H1 (cell line): ENCODE measurements at regions of chr10 and their contacts with region 1.

Region 1: DNA sequence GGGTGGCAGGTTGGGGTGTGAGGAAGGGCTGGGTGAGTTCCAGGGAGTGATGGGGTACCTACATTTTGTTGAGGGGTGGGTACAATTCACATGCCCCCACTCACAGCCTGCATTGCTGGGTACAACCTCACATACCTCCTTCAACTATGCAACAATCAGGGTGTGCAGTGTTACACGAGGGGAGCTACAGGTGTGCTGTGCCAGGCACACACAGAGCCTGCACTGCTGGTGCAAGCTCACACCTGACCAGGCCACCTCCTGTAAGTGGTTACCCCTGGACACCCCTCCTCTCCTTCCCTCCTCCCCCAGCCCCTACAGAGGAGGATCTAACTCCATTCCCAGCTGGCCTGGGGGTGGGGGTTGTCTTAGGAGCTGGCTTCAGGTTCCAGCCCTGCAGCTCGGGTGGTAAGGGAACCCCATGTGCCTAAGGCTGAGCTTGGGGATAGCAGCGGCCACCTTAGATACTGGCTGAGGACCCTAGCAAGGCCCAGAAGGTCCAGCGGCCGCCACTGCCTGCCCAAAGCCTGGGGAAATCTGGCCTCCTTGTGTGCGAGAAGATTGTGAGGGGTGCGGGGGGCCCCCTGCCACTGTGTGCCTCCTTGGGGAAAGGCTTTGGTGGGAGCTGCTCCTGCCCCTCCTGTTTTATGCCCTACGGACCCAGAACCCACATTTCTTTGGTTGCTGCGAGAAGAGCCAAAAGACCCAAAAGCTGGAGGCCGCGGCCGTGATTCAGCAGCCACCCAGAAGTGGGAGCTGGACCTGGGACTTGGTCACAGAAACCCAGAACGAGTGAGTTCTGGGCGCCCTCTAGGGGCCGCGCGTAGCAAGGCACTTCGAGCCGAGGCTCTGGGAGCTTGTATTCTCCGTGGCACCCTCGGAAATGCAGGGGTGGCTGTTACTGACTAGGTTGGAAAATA is 10.8 kb downstream of the TLX1 start:
- DNase-seq: peak in 1 of 2 experiments; percentile 93
- H3K4me3 ChIP-seq: no peak overlapping the region
- H3K27ac ChIP-seq: no peak overlapping the region
- H3K4me1 ChIP-seq: peaks cover 0 to 18% (median 9%) of the 10 kb centered on the region in 4 experiments; a peak in 5 of 7 replicates
- H3K27me3 ChIP-seq: peaks cover 97 to 100% (median 99%) of the 10 kb centered on the region in 4 experiments
- CTCF ChIP-seq: peak in 2 of 3 experiments; percentile 93 to 95; a peak in 3 of 4 replicates
- EP300 ChIP-seq: no peak
- POLR2A ChIP-seq: no peak
- RAD21 ChIP-seq: peak; percentile 84 to 90

Region 2: DNA sequence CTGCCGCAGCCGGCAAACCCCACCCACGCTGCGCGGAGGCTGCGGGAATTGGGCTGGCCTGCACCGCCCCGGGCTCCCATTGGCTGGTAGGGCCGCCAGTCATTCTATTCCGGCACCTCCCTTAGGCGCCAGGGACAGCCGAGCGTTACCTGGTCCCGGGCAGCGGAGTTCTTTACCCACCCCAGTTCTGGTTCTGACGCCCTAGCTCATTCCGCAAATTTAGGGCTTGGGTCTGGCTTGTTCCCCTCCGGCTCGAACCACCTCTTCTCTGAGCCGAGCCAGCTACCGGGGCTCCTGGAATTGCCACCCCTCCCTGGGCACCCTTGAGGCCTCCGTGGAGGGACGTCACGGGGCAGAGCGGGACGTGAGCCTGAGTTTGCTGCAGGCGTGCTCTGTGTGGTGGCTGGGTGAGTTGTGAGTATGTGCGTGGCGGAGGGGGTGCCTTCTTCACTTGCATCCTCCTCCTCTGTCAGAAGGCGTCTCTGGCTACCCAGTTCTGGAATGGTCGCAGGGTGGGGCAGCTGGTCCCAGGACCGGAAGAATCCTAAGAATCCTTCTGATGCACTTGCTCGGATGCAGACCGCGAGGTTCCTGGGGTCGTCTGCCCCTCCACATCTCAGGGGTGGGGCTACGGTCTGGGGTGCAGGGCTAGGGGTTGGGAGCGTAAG is 110.6 kb before region 1 on chr10 and contains the starts of genes PDZD7 and SFXN3:
- CTCF ChIA-PET with region 1: interaction called, 10 read pairs
- POLR2A ChIA-PET with region 1: no interaction called
- DNase-seq: peak in 1 of 2 experiments; percentile 98
- H3K4me3 ChIP-seq: peak within 1 kb of the TSS; percentile 41 to 66 (median 58)
- H3K27ac ChIP-seq: no peak within 1 kb of the TSS
- H3K4me1 ChIP-seq: peaks cover 0 to 26% (median 21%) of the 10 kb centered on the region in 4 experiments; a peak in 6 of 7 replicates
- H3K27me3 ChIP-seq: peaks cover 1 to 45% (median 36%) of the 10 kb centered on the region in 4 experiments
- CTCF ChIP-seq: no peak
- EP300 ChIP-seq: no peak
- POLR2A ChIP-seq: no peak
- RAD21 ChIP-seq: no peak
- total RNA-seq, gene PDZD7: 0.88 and 1.1 TPM in 2 replicates
- total RNA-seq, gene SFXN3: 2.8 and 3.1 TPM in 2 replicates

Region 3: GRCh38 chr10:101060036-101060950 is 81.6 kb before region 1 on chr10:
- CTCF ChIA-PET with region 1: interaction called, 240 read pairs
- POLR2A ChIA-PET with region 1: interaction called, 3 read pairs
- DNase-seq: peak in 1 of 2 experiments; percentile 95
- H3K4me3 ChIP-seq: peak overlapping the region; percentile 89 to 97 (median 94)
- H3K27ac ChIP-seq: peak overlapping the region; percentile 76
- H3K4me1 ChIP-seq: peaks cover 0 to 26% (median 16%) of the 10 kb centered on the region in 4 experiments; a peak in 6 of 7 replicates
- H3K27me3 ChIP-seq: peaks cover 35 to 42% (median 39%) of the 10 kb centered on the region in 4 experiments
- CTCF ChIP-seq: peak; percentile 85 to 89 (median 86)
- EP300 ChIP-seq: no peak
- POLR2A ChIP-seq: no peak; a peak in 1 of 3 replicates
- RAD21 ChIP-seq: peak; percentile 77 to 83

Region 4: DNA sequence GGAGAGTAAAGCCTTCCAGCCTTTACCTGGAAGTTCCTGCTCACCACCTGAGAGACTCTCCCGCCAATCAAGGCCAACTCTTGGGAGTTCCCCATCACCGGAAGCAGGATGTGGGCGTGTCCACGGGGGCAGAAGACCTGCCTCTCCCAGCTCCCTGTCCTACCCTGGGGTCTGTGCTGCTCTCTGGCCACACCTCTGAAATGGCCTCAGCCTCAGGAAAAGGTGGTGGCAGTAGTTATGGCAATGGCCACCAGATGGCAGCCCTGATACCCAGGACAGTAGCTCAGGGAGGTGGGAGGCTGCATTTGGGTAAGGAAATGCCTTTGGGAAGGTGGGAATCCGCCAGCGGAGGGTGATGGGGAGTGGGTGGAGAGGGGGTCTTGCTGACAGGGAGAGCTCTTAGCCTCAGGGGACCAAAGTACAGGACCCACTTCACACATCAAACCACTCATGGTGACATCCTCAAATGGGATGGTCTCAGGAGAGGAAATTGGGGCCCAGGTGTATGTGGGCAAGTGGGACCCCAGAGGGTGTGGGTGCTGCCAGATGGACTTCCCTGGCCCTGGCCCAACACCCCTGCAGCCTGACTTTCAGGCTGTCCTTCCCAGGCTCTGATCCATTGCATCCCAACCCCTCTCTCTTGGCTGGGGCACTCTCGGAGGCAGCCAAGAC is 46.2 kb before region 1 on chr10:
- CTCF ChIA-PET with region 1: interaction called, 268 read pairs
- POLR2A ChIA-PET with region 1: interaction called, 6 read pairs
- DNase-seq: peak; percentile 96
- H3K4me3 ChIP-seq: peak overlapping the region in 1 of 4 experiments; percentile 19; a peak in 1 of 8 replicates
- H3K27ac ChIP-seq: no peak overlapping the region
- H3K4me1 ChIP-seq: peaks cover 3 to 15% (median 8%) of the 10 kb centered on the region in 4 experiments; a peak in 5 of 7 replicates
- H3K27me3 ChIP-seq: peaks cover 0 to 25% (median 10%) of the 10 kb centered on the region in 4 experiments; a peak in 4 of 7 replicates
- CTCF ChIP-seq: peak; percentile 89 to 99 (median 92)
- EP300 ChIP-seq: no peak
- POLR2A ChIP-seq: no peak
- RAD21 ChIP-seq: peak; percentile 68 to 83

Region 5: GRCh38 chr10:101130984-101131961 is 10.6 kb before region 1 on chr10 and contains the start of gene TLX1:
- CTCF ChIA-PET with region 1: interaction called, 50 read pairs
- POLR2A ChIA-PET with region 1: interaction called, 5 read pairs
- DNase-seq: no peak
- H3K4me3 ChIP-seq: peak within 1 kb of the TSS in 3 of 4 experiments; percentile 18 to 51 (median 26); a peak in 3 of 8 replicates
- H3K27ac ChIP-seq: no peak within 1 kb of the TSS
- H3K4me1 ChIP-seq: peaks cover 0 to 22% (median 4%) of the 10 kb centered on the region in 4 experiments; a peak in 5 of 7 replicates
- H3K27me3 ChIP-seq: peaks cover 95 to 100% (median 100%) of the 10 kb centered on the region in 4 experiments
- CTCF ChIP-seq: no peak
- EP300 ChIP-seq: no peak
- POLR2A ChIP-seq: no peak
- RAD21 ChIP-seq: no peak
- total RNA-seq, gene TLX1: not detected in 2 replicates

Region 6: GRCh38 chr10:101238732-101239105 is 96.8 kb after region 1 on chr10:
- CTCF ChIA-PET with region 1: interaction called, 25 read pairs
- POLR2A ChIA-PET with region 1: interaction called, 4 read pairs
- DNase-seq: no peak
- H3K4me3 ChIP-seq: no peak overlapping the region
- H3K27ac ChIP-seq: no peak overlapping the region
- H3K4me1 ChIP-seq: peaks cover 0 to 14% (median 6%) of the 10 kb centered on the region in 4 experiments; a peak in 6 of 7 replicates
- H3K27me3 ChIP-seq: peaks cover 69 to 84% (median 77%) of the 10 kb centered on the region in 4 experiments
- CTCF ChIP-seq: peak; percentile 80 to 94 (median 88)
- EP300 ChIP-seq: no peak
- POLR2A ChIP-seq: no peak
- RAD21 ChIP-seq: peak; percentile 25 to 57; a peak in 3 of 4 replicates